ENCODE measurements at regions of chr12 and their contacts with region 1.

Region 1: GRCh38 chr12:8890313-8891085 is 23.8 kb upstream of the PHC1 start:
- DNase-seq: peak; percentile 67
- H3K4me3 Mint-ChIP-seq: peak overlapping the region; percentile 83
- H3K27ac Mint-ChIP-seq: peak overlapping the region; percentile 86
- H3K4me1 Mint-ChIP-seq: peaks cover 6% of the 10 kb centered on the region
- H3K27me3 Mint-ChIP-seq: no peaks in the 10 kb centered on the region
- CTCF ChIP-seq: peak; percentile 82

Region 2: DNA sequence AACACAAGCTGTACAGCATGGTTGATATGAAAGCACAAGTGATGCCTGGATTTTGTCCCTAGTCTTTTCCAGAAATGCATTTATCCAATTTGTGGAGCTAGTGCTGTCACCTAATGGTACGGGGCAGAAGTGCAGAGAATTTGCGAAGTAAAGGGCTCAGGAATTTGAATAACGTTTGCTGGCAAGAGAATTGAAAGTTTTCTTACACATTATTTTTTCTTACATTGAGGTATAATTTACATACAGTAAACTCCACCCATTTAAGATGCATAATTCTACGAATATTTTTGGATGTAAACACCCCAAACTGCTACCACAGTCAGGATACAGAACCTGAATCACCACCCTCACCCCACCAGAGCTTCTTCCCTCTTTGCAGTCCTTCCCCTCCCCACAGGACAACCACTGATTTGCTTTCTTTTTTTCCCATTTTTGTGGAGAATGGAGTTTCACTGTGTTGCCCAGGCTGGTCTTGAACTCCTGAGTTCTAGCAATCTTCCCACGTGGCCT is 281.4 kb before region 1 on chr12:
- CTCF ChIA-PET with region 1: interaction called, 10 read pairs
- POLR2A ChIA-PET with region 1: no interaction called
- intact Hi-C with region 1: no loop called
- DNase-seq: peak; percentile 55
- H3K4me3 Mint-ChIP-seq: peak overlapping the region; percentile 63
- H3K27ac Mint-ChIP-seq: no peak overlapping the region
- H3K4me1 Mint-ChIP-seq: peaks cover 10% of the 10 kb centered on the region
- H3K27me3 Mint-ChIP-seq: peaks cover 36% of the 10 kb centered on the region
- CTCF ChIP-seq: peak; percentile 75

Region 3: DNA sequence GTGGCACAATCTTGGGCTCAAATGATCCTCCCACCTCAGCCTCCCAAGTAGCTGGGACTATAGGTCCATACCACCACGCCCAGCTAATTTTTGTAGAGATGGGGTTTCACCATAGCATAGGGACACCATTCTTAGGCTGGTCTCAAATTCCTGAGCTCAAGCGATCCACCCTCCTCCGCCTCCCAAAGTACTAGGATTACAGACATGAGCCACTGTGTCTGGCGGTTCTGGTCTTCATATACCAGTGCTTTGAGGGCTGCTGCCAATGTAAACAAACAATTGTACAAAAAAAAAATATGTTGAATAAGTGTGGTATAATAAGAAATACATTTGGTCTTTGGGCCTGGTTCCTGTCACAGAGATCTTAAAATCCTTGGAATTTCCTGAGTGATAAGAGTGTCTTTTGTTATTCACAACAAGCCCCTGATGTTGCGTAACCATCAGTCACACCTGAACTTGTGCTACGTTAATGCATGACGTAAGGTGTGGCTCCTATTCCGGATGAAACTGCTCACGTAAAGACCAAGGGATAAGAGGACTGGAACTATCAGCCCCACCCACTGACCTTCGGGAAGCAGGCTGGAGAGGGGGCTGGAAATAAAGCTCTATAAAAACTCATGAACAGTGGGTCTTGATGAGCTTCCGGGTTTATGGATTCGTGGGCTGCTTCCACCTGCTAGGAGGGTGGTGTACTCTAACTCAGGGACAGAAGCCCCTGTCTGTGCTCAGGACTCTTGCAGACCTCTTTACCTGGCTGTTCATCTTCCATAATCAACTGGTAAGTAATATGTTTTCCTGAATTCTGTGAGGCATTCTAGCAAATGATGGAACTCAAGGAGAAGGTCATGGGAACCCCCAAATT is 209.2 kb before region 1 on chr12:
- CTCF ChIA-PET with region 1: interaction called, 165 read pairs
- POLR2A ChIA-PET with region 1: interaction called, 9 read pairs
- intact Hi-C with region 1: loop called (anchors 1 kb)
- DNase-seq: peak; percentile 79
- H3K4me3 Mint-ChIP-seq: peak overlapping the region; percentile 67
- H3K27ac Mint-ChIP-seq: peak overlapping the region; percentile 63
- H3K4me1 Mint-ChIP-seq: peaks cover 19% of the 10 kb centered on the region
- H3K27me3 Mint-ChIP-seq: no peaks in the 10 kb centered on the region
- CTCF ChIP-seq: no peak

Region 4: GRCh38 chr12:8771072-8771471 is 119.4 kb before region 1 on chr12:
- CTCF ChIA-PET with region 1: interaction called, 16 read pairs
- POLR2A ChIA-PET with region 1: no interaction called
- intact Hi-C with region 1: loop called (anchors 10 kb)
- DNase-seq: no peak
- H3K4me3 Mint-ChIP-seq: no peak overlapping the region
- H3K27ac Mint-ChIP-seq: peak overlapping the region; percentile 46
- H3K4me1 Mint-ChIP-seq: no peaks in the 10 kb centered on the region
- H3K27me3 Mint-ChIP-seq: no peaks in the 10 kb centered on the region
- CTCF ChIP-seq: no peak

Region 5: DNA sequence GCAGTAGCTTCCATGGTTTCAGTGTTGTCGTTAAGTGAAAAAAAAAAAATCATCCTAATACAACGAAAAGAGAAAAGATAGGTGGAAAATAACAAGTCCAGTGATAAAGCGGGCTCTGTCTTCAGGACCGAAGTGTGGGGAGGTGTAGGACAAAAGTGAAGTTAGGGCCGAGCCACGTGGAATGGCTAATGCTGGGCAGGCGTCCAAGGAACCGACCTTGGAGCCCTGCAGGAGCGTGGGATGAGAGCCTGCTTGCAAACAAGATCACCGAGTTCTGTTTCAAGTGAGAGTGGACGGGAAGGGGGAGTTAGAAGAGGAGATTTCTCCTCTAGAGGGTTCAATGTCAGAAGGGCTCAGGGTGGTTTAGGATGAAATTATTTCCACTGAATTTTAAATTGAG is 45.8 kb before region 1 on chr12:
- CTCF ChIA-PET with region 1: no interaction called
- POLR2A ChIA-PET with region 1: no interaction called
- intact Hi-C with region 1: no loop called
- DNase-seq: no peak
- H3K4me3 Mint-ChIP-seq: no peak overlapping the region
- H3K27ac Mint-ChIP-seq: no peak overlapping the region
- H3K4me1 Mint-ChIP-seq: no peaks in the 10 kb centered on the region
- H3K27me3 Mint-ChIP-seq: no peaks in the 10 kb centered on the region
- CTCF ChIP-seq: no peak

Region 6: DNA sequence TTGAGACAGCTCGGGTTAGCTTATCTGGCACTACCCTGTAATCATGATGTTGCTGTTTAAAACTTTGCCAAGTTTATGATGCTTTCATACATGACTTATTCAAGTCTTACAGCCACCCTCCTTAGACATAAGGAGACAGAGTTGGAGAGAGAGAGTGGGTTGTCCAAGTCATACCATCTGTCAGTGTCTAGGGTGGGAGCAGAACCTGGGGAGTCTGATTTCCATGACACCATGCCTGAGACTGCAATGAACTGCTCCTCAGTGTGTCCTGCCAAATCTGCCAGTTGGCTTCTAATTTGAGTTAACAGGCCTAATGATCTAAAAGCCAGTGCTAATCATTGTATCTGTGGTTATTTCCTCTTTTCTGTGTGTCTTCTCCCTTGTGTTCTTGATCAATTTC is 19.9 kb before region 1 on chr12:
- CTCF ChIA-PET with region 1: interaction called, 11 read pairs
- POLR2A ChIA-PET with region 1: no interaction called
- intact Hi-C with region 1: no loop called
- DNase-seq: no peak
- H3K4me3 Mint-ChIP-seq: no peak overlapping the region
- H3K27ac Mint-ChIP-seq: no peak overlapping the region
- H3K4me1 Mint-ChIP-seq: no peaks in the 10 kb centered on the region
- H3K27me3 Mint-ChIP-seq: no peaks in the 10 kb centered on the region
- CTCF ChIP-seq: no peak

Region 7: GRCh38 chr12:8914716-8915526 is 24.4 kb after region 1 on chr12:
- CTCF ChIA-PET with region 1: interaction called, 12 read pairs
- POLR2A ChIA-PET with region 1: interaction called, 3 read pairs
- intact Hi-C with region 1: no loop called
- DNase-seq: peak; percentile 61
- H3K4me3 Mint-ChIP-seq: no peak overlapping the region
- H3K27ac Mint-ChIP-seq: no peak overlapping the region
- H3K4me1 Mint-ChIP-seq: peaks cover 16% of the 10 kb centered on the region
- H3K27me3 Mint-ChIP-seq: no peaks in the 10 kb centered on the region
- CTCF ChIP-seq: no peak

Region 8: GRCh38 chr12:9113987-9114309 is 223.4 kb after region 1 on chr12:
- CTCF ChIA-PET with region 1: no interaction called
- POLR2A ChIA-PET with region 1: no interaction called
- intact Hi-C with region 1: no loop called
- DNase-seq: no peak
- H3K4me3 Mint-ChIP-seq: no peak overlapping the region
- H3K27ac Mint-ChIP-seq: no peak overlapping the region
- H3K4me1 Mint-ChIP-seq: no peaks in the 10 kb centered on the region
- H3K27me3 Mint-ChIP-seq: no peaks in the 10 kb centered on the region
- CTCF ChIP-seq: no peak

Region 9: GRCh38 chr12:9820281-9820930 is 929.9 kb after region 1 on chr12:
- CTCF ChIA-PET with region 1: no interaction called
- POLR2A ChIA-PET with region 1: no interaction called
- intact Hi-C with region 1: no loop called
- DNase-seq: no peak
- H3K4me3 Mint-ChIP-seq: no peak overlapping the region
- H3K27ac Mint-ChIP-seq: no peak overlapping the region
- H3K4me1 Mint-ChIP-seq: no peaks in the 10 kb centered on the region
- H3K27me3 Mint-ChIP-seq: no peaks in the 10 kb centered on the region
- CTCF ChIP-seq: no peak

Measured in MCF 10A (cell line).